ENCODE measurements at regions of chr16 and their contacts with region 1.

Region 1: GRCh38 chr16:4288148-4288921 is 15.5 kb upstream of the TFAP4 start:
- DNase-seq: peak; percentile 90
- ATAC-seq: peak; percentile 79

Region 2: DNA sequence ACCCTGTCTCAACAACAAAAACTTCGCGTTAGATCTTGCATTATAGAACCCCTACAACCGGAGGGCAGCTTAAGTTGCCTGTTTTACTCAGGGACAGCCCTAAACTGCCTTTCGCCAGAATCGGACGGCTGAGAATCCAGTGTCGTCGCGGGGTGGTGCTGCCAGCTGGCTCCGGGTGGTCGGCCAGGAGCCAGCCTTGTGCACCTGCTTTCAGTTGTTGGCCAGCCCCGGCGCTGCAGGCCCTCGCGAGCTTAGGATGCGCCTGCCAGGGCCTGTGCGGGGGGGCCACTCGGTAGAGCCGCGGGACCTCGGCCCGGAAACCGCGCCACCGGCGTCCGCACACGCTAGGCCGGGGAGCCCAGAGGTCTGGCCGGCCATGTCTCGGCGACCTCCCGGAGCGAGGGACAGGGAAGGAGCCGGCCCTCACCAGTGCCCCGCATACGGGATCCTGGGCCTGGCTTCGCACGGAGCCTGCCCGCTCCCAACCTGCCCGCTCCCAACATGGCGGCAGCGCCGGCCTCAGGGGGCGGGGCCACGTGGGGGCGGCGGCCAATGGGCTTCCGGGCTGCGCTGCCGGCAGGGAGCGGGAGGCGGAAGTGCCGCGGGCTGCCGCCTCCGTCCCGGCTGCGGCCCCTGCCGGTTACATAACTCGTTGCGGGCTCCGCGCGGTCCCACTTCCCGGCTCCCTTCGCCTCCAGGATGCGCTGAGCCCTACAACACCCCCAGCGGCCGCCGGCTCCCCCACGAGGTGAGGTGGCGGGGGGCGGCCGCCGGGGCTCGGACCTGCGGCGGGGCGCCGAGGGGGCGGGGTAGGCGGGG is 830.7 kb before region 1 on chr16:
- intact Hi-C with region 1: no loop called
- DNase-seq: peak; percentile 96
- ATAC-seq: peak; percentile 90

Region 3: GRCh38 chr16:4330277-4330874 is 42.0 kb after region 1 on chr16:
- intact Hi-C with region 1: loop called (anchors 5 kb)
- DNase-seq: peak; percentile 92
- ATAC-seq: peak; percentile 61

Measured in left ventricle myocardium superior (tissue), 1 donor.